Dendritic cell treated with granulocyte-macrophage colony-stimulating factor and Interleukin-4, amounts not matched to agents 40 ng/mL and 50 ng/mL, for 4 days (primary cell): ENCODE measurements at regions of chr4 and their contacts with region 1.

Region 1: DNA sequence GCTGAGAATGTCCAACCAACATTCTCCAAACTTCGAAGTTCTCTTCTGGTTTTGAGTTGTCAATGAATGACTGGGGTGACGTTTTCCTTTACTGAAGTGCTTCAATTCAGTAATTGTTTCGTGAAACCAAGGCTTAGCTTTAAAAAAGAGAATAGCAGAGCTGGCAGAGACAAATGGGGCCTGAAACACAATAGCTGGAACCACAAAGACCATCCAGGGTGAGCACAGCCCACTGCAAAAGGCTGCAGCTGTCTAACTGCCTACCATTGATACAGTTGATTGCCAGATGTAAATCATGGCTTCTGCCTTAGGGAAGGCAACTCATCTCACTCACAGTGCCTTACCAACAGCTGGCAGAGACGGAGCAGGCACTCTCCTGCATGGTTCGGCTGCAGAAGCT is 78.7 kb upstream of the ZNF518B start:
- H3K4me3 Mint-ChIP-seq: no peak overlapping the region
- H3K27ac Mint-ChIP-seq: no peak overlapping the region
- H3K4me1 Mint-ChIP-seq: no peaks in the 10 kb centered on the region
- H3K27me3 Mint-ChIP-seq: no peaks in the 10 kb centered on the region

Region 2: DNA sequence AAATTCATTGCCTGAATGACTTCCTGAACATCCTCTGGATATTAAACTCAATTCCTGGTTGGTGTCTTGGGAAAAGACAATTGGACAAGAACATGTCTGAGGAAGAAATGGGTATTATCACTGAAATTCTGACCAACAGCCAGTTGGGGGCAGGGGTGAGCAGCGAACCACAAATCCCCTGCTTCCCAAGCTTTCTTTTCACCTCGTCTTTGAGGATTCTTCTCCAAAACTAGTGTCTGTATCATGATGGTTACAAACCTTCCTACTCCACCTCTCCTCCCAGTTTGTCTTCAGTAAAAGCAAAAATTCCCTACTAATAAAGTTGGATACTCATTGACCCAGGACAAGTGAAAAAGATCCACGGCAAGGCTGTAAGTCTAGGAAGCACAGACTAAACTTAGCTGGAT is 371.0 kb before region 1 on chr4:
- intact Hi-C with region 1: loop called (anchors 1 kb)
- H3K4me3 Mint-ChIP-seq: no peak overlapping the region
- H3K27ac Mint-ChIP-seq: no peak overlapping the region
- H3K4me1 Mint-ChIP-seq: no peaks in the 10 kb centered on the region
- H3K27me3 Mint-ChIP-seq: peaks cover 1% of the 10 kb centered on the region

Region 3: DNA sequence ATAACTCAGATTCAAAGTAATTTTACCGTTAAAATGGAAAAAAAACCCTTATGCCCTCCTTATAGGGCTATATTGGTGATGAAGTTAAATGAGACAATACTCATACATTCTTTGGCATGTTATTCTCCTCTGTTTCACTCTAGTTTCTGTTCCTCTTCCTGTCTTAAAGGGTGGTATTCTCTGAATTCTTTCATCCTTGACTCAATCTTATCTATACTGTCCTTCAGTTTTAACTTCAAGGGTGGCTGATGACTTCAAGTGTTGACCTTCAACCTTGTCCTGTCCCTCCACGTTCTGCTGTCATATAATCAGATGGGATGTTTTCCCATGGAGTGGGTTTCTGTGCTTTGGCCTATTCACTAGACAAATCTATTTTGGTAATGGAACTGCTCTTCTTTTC is 122.7 kb before region 1 on chr4:
- intact Hi-C with region 1: no loop called
- H3K4me3 Mint-ChIP-seq: no peak overlapping the region
- H3K27ac Mint-ChIP-seq: no peak overlapping the region
- H3K4me1 Mint-ChIP-seq: peaks cover 5% of the 10 kb centered on the region
- H3K27me3 Mint-ChIP-seq: peaks cover 3% of the 10 kb centered on the region

Region 4: DNA sequence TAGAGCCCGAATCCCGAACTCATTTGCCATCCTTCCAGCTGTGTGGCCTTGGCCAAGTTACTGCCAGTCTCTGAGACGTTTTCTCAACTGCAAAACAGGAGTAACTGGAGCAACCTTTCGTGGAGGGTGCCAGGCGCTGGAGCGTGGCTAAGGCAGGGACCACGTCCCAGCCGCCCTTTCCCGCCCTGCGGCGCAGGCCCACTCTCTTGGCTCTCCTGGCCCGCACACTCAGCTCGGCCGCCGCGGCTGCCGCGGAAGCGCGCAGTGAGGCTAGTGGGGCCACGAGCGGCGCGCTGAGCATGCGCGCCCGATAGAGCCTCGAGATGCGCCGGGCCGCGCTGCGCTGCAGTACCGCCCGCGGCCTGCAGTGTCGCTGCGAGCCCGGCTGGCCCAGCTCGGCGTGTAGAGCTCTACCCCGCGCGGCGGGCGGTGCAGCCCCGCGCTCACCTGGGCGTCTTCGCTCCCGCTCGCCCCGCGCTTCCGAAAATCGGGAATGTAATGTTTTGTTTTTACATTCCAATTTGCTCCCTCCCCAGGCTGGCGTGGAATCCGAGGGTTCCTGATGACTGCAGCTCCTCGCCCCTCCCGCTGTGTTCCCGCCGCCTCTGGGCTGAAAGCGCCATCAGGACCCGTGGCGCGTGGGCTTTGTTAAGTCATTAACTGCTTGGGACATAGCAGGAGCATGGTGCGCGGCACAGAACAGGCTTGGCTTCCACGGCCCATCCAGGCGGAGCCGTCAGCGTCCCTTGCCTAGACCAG is 74.6 kb before region 1 on chr4:
- intact Hi-C with region 1: loop called (anchors 1 kb)
- H3K4me3 Mint-ChIP-seq: peak overlapping the region; percentile 77
- H3K27ac Mint-ChIP-seq: peak overlapping the region; percentile 50
- H3K4me1 Mint-ChIP-seq: peaks cover 20% of the 10 kb centered on the region
- H3K27me3 Mint-ChIP-seq: peaks cover 72% of the 10 kb centered on the region

Region 5: DNA sequence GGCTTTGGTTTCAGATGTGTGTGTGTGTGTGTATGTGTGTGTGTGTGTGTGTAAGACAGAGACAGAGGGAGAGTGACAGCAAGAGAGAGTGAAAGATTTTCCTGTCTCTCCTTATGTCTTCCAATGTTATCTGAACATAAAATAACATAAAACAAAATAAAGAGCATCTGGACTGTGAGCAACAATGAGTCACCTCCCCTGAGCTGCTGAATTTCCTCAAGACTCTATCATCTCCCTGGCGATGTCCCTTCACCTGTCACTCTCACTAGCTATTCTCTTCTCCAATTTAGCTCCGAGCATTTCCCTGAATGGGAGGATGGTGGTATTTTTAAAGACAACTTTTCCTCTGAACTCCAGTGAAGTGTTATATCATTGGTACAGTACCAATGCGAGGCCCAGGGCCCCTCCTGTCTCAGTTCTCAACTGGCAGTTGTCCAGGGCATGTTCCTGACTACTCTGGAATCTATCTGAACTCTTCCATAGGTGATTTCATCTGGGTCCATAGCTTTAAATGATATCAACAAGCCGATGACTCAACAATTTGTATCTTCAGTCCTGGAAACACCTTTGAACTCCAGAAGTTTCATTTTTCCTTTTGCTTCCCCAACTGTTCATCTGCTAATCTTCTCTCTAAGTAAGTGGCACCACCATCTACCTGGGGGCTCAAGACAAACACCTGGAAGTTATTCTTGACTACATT is 343.6 kb after region 1 on chr4:
- intact Hi-C with region 1: no loop called
- H3K4me3 Mint-ChIP-seq: no peak overlapping the region
- H3K27ac Mint-ChIP-seq: no peak overlapping the region
- H3K4me1 Mint-ChIP-seq: no peaks in the 10 kb centered on the region
- H3K27me3 Mint-ChIP-seq: no peaks in the 10 kb centered on the region